A673 (cell line): ENCODE measurements at regions of chr9 and their contacts with region 1.

Region 1: DNA sequence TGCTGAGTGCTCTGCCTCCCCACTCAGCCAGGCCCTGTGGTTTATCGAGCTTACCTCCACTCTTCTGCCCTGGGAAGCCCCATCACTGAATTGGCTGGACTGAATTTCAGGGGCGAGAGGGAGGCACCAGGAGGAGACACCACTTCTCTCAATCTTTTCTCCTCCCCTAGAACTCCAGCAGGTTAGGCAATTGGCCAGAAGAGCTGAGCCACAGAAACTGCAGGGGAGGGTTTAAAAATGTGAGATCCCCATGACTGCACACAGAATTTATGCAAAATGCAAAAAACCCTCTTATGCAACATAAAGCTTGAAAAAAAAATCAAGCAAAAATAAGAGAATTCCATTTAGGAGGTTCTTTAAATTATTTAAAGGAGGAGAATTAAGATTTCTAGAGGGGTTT is 29.9 kb downstream of the TUT7 start:
- DNase-seq: peak; percentile 10
- H3K4me3 ChIP-seq: no peak overlapping the region
- H3K27ac ChIP-seq: no peak overlapping the region
- H3K4me1 ChIP-seq: no peaks in the 10 kb centered on the region
- H3K27me3 ChIP-seq: no peaks in the 10 kb centered on the region
- CTCF ChIP-seq: no peak

Region 2: GRCh38 chr9:85702726-85703289 is 621.5 kb before region 1 on chr9:
- CTCF ChIA-PET with region 1: no interaction called
- POLR2A ChIA-PET with region 1: interaction called, 14 read pairs
- intact Hi-C with region 1: no loop called
- DNase-seq: no peak
- H3K4me3 ChIP-seq: no peak overlapping the region
- H3K27ac ChIP-seq: no peak overlapping the region
- H3K4me1 ChIP-seq: peaks cover 6% of the 10 kb centered on the region
- H3K27me3 ChIP-seq: no peaks in the 10 kb centered on the region
- CTCF ChIP-seq: no peak

Region 3: GRCh38 chr9:86405926-86406325 is 81.6 kb after region 1 on chr9:
- CTCF ChIA-PET with region 1: no interaction called
- POLR2A ChIA-PET with region 1: no interaction called
- intact Hi-C with region 1: no loop called
- DNase-seq: peak; percentile 84
- H3K4me3 ChIP-seq: no peak overlapping the region
- H3K27ac ChIP-seq: no peak overlapping the region
- H3K4me1 ChIP-seq: peaks cover 10% of the 10 kb centered on the region
- H3K27me3 ChIP-seq: no peaks in the 10 kb centered on the region
- CTCF ChIP-seq: no peak